B cell (primary cell): ENCODE measurements at regions of chr16 and their contacts with region 1.

Region 1: GRCh38 chr16:28950648-28951409 is at the start of gene NFATC2IP:
- DNase-seq: peak; percentile 100
- ATAC-seq: peak; percentile 95
- H3K4me3 ChIP-seq: peak within 1 kb of the TSS; percentile 52 to 90 (median 80)
- H3K4me3 Mint-ChIP-seq: peak within 1 kb of the TSS; percentile 90
- H3K27ac ChIP-seq: peak within 1 kb of the TSS; percentile 51 to 79
- H3K27ac Mint-ChIP-seq: peak within 1 kb of the TSS; percentile 88
- H3K4me1 ChIP-seq: peaks cover 10 to 21% of the 10 kb centered on the region in 2 donors
- H3K4me1 Mint-ChIP-seq: peaks cover 30% of the 10 kb centered on the region
- H3K27me3 ChIP-seq: no peaks in the 10 kb centered on the region
- H3K27me3 Mint-ChIP-seq: no peaks in the 10 kb centered on the region
- CTCF ChIP-seq: no peak
- total RNA-seq, gene NFATC2IP: 102 TPM in 2 replicates

Region 2: DNA sequence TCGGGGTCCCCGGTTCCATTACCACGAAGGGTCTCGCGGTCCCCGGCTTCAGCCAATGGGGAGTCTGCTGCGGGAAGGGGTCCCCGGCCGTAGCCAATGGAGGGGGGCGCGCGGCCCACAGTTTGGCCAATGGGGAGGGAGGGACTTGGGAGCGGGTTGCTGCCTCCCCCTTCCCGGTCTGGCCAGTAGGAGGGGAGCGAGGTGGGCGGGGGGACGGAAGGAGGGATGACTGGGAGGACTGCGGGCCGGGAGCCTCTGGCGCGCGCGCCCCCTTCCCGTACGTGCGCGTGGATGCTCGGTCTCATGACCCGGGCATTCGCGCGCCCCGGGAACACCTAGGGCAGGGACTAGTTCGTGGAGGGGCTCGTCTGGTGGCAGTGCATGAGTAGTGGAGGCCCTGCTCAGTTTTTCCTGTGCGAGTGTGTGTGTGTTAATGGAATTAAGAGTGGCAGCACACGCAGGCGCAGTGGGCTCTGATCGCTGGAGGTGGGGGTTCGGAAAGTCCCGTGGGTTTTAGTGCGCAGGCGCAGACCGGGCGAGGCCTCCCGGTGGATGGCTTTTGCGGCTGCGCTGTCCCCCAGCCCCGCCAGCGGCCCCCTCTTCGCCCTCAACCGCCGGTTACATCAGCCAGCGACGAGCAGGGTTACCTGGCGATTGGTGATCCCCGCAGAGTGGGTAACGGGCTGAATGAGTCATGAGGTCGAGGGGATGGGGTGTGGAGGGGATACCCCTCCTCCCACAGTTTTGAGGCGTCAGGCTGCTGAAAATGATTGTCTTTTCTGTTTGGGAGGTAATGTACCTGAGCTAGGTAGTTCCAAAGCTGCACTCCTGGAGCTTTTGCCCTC is 126.7 kb before region 1 on chr16:
- CTCF ChIA-PET with region 1: interaction called, 4 read pairs
- POLR2A ChIA-PET with region 1: interaction called, 9 read pairs
- intact Hi-C with region 1: loop called (anchors 1 kb)
- DNase-seq: peak; percentile 97
- ATAC-seq: peak; percentile 76
- H3K4me3 ChIP-seq: peak overlapping the region; percentile 76 to 95 (median 87)
- H3K4me3 Mint-ChIP-seq: peak overlapping the region; percentile 98
- H3K27ac ChIP-seq: peak overlapping the region; percentile 98 to 99
- H3K27ac Mint-ChIP-seq: peak overlapping the region; percentile 97
- H3K4me1 ChIP-seq: peaks cover 19 to 23% of the 10 kb centered on the region in 2 donors
- H3K4me1 Mint-ChIP-seq: peaks cover 28% of the 10 kb centered on the region
- H3K27me3 ChIP-seq: no peaks in the 10 kb centered on the region
- H3K27me3 Mint-ChIP-seq: no peaks in the 10 kb centered on the region
- CTCF ChIP-seq: no peak

Region 3: GRCh38 chr16:28863929-28864793 is 86.7 kb before region 1 on chr16:
- CTCF ChIA-PET with region 1: interaction called, 70 read pairs
- POLR2A ChIA-PET with region 1: interaction called, 23 read pairs
- intact Hi-C with region 1: loop called (anchors 1 kb)
- DNase-seq: peak; percentile 41
- ATAC-seq: no peak
- H3K4me3 ChIP-seq: peak overlapping the region; percentile 9 to 98 (median 77)
- H3K4me3 Mint-ChIP-seq: peak overlapping the region; percentile 100
- H3K27ac ChIP-seq: peak overlapping the region; percentile 79 to 82
- H3K27ac Mint-ChIP-seq: peak overlapping the region; percentile 99
- H3K4me1 ChIP-seq: peaks cover 5 to 25% of the 10 kb centered on the region in 2 donors
- H3K4me1 Mint-ChIP-seq: peaks cover 28% of the 10 kb centered on the region
- H3K27me3 ChIP-seq: no peaks in the 10 kb centered on the region
- H3K27me3 Mint-ChIP-seq: no peaks in the 10 kb centered on the region
- CTCF ChIP-seq: no peak

Region 4: DNA sequence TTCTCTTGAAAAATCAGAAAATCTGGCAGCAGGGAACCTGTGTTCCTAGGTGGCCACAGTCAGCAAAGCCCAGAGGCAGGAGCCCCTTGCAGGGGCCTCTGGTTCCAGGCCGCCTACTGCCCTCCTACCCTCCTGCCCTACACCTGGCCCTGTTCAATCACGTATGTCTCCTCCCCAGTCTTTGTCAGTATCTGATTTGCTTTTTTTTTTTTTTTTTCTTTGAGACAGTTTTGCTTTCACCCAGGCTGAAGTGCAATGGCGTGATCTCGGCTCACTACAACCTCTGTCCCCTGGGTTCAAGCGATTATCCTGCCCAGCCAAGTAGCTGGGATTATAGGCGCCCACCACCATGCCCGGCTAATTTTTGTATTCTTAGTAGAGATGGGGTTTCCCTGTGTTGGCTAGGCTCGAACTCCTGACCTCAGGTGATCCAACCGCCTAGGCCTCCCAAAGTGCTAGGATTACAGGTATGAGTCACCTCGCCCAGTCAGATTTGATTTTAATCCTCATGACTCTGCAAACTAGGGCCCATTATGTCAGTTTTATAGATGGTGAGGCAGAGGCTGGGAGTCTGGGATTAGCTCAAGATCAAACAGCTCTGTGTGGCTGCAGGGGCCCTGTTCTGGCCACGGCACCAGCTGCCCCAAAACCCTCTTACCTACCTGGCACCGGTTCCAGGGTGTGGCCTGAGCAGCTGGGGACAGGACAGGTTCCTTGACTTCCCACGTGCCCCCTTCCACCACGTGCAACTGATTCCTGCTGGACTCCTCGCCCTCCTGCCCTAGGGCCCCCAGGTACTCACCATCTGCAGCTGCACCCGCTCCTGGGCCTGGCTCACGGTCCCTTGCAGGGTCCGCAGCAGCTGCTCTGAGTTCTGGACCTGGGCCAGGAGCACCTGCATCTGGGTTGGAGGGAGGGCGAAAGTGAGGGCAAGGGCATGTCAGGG is 40.5 kb before region 1 on chr16:
- CTCF ChIA-PET with region 1: interaction called, 17 read pairs
- POLR2A ChIA-PET with region 1: no interaction called
- intact Hi-C with region 1: no loop called
- DNase-seq: peak; percentile 53
- ATAC-seq: peak; percentile 71
- H3K4me3 ChIP-seq: no peak overlapping the region
- H3K4me3 Mint-ChIP-seq: no peak overlapping the region
- H3K27ac ChIP-seq: peak overlapping the region; percentile 4 to 66
- H3K27ac Mint-ChIP-seq: peak overlapping the region; percentile 77
- H3K4me1 ChIP-seq: peaks cover 12 to 19% of the 10 kb centered on the region in 2 donors
- H3K4me1 Mint-ChIP-seq: peaks cover 13% of the 10 kb centered on the region
- H3K27me3 ChIP-seq: no peaks in the 10 kb centered on the region
- H3K27me3 Mint-ChIP-seq: no peaks in the 10 kb centered on the region
- CTCF ChIP-seq: no peak

Region 5: DNA sequence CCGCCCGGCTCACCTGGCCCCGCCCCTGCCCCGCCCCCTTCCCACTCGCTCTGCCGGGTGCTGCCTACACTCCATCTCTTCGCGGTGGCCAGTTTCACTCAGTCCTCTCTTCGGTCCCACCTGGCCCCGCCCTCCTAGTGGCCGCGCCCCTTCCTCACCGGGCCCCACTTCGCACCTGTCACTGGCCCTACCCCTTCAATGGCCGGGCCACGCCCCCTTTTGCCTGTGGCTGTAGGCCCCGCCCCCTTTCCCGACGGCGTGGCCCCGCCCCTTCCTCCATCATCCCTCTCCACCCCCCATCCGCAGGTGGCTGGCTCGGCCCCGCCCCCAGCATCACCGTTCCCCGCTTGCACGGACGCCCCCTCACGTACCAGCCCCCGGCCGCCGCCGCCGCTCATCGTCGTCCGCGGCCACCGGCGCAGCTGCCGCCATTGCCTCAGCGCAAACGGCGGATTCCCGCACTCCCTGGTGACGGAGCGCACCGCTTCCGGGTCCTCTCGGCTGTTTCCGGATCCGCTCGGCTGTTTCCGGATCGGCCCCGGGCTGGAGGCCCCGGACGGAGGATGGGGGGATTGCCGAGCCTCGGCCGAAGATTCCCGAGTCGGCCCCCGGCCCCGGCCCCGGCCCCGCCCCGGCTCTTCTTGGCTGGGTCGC is 26.0 kb before region 1 on chr16 and contains the start of gene RABEP2:
- CTCF ChIA-PET with region 1: interaction called, 114 read pairs
- POLR2A ChIA-PET with region 1: interaction called, 18 read pairs
- intact Hi-C with region 1: loop called (anchors 1 kb)
- DNase-seq: peak; percentile 97
- ATAC-seq: peak; percentile 60
- H3K4me3 ChIP-seq: peak within 1 kb of the TSS; percentile 58 to 97 (median 92)
- H3K4me3 Mint-ChIP-seq: peak within 1 kb of the TSS; percentile 95
- H3K27ac ChIP-seq: peak within 1 kb of the TSS; percentile 87 to 91
- H3K27ac Mint-ChIP-seq: peak within 1 kb of the TSS; percentile 98
- H3K4me1 ChIP-seq: peaks cover 30 to 61% of the 10 kb centered on the region in 2 donors
- H3K4me1 Mint-ChIP-seq: peaks cover 51% of the 10 kb centered on the region
- H3K27me3 ChIP-seq: no peaks in the 10 kb centered on the region
- H3K27me3 Mint-ChIP-seq: no peaks in the 10 kb centered on the region
- CTCF ChIP-seq: no peak
- total RNA-seq, gene RABEP2: 132 and 136 TPM in 2 replicates

Region 6: GRCh38 chr16:29139261-29139811 is 188.5 kb after region 1 on chr16:
- CTCF ChIA-PET with region 1: no interaction called
- POLR2A ChIA-PET with region 1: no interaction called
- intact Hi-C with region 1: no loop called
- DNase-seq: no peak
- ATAC-seq: no peak
- H3K4me3 ChIP-seq: no peak overlapping the region
- H3K4me3 Mint-ChIP-seq: no peak overlapping the region
- H3K27ac ChIP-seq: no peak overlapping the region
- H3K27ac Mint-ChIP-seq: no peak overlapping the region
- H3K4me1 ChIP-seq: no peaks in the 10 kb centered on the region
- H3K4me1 Mint-ChIP-seq: no peaks in the 10 kb centered on the region
- H3K27me3 ChIP-seq: no peaks in the 10 kb centered on the region
- H3K27me3 Mint-ChIP-seq: no peaks in the 10 kb centered on the region
- CTCF ChIP-seq: no peak